GM12878 (cell line): ENCODE measurements at regions of chr18 and their contacts with region 1.

Region 1: DNA sequence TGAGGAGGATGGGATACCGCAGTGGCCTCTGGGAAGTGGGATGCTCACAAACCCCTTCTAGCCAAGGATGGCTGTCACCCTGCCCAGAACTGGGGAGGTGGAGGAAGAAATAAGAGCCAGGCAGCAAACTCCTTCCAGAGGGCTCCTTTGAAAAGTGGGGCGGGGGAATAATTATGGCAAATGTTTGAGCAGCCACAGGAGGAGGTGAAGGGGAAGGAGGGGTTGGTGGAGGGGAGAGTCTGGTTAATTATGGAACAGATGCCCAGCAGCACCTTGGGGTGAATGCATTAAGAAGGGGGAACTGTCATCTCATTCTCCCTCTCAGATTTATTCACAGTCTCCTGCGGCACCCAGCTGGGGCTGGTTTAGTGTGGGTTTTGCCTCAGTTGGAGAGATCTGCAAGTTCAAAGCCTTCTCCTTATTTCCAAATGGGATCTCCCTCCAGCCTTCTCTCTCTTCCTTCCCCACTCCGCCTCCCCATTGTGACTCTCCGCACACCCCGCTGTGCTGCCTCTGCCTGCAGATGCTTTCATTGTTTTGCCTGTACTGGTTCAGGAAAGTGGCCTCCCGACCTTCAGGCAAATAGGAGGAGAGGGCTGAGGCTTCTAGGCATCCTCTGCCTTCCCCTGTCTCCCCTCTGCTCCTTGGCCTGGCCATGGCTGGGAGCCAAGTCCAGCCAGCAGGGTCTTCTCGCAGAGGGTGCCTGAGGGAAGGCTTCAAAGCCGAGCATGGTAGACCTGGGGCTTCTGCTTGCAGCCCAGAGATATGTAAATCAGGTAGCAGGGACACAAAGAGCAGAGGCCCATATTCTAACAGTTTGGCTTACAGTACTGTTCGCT is 457.2 kb upstream of the MEX3C start:
- DNase-seq: no peak
- ATAC-seq: peak; percentile 90
- H3K4me3 ChIP-seq: no peak overlapping the region
- H3K27ac ChIP-seq: peak overlapping the region; percentile 5
- H3K4me1 ChIP-seq: peaks cover 14% of the 10 kb centered on the region
- H3K27me3 ChIP-seq: no peaks in the 10 kb centered on the region
- CTCF ChIP-seq: no peak
- EP300 ChIP-seq: no peak
- POLR2A ChIP-seq: peak; percentile 44
- RAD21 ChIP-seq: no peak

Region 2: GRCh38 chr18:51630706-51631105 is 24.0 kb before region 1 on chr18:
- CTCF ChIA-PET with region 1: interaction called, 4 read pairs
- POLR2A ChIA-PET with region 1: interaction called, 5 read pairs
- RAD21 ChIA-PET with region 1: interaction called, 6 read pairs
- SMC1A ChIA-PET with region 1: interaction called, 19 read pairs
- in situ Hi-C with region 1: no loop called
- intact Hi-C with region 1: no loop called
- DNase-seq: peak; percentile 9
- ATAC-seq: peak; percentile 57
- H3K4me3 ChIP-seq: no peak overlapping the region
- H3K27ac ChIP-seq: no peak overlapping the region
- H3K4me1 ChIP-seq: no peaks in the 10 kb centered on the region
- H3K27me3 ChIP-seq: no peaks in the 10 kb centered on the region
- CTCF ChIP-seq: no peak
- EP300 ChIP-seq: no peak
- POLR2A ChIP-seq: no peak
- RAD21 ChIP-seq: no peak

Region 3: DNA sequence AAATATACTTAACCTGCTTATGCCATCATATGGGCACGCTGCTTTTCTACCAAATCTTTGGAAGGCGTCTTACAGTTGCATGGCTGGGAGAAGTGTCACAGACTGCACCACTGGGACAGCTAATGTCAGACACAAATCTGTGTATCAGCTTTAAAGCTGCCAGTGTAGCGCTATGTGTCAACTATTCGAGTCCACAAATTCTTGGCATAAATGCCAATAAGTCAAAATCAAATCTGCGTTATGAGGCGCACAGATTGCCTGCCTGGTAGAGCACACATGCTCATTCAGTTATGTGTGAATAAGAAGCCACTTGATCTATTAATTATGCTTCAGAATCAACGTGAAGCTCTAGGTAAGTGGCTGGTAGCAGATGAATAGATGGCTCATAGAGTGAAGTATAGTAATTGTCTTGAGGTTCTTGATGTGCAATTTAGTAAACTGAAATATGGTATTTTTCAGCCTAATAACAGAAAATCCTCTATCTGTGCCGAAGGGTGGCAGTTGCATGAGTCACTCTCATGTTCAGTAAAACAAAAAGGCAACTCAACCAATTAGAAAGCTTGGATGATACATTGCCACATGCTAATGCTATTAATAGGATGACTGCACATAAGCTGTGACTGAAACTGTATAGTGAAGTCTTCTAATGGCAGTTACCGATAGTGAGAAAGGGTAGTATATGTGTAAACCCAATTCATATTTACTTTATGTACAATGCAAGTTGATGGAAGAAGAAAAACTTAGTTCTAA is 737.3 kb after region 1 on chr18:
- CTCF ChIA-PET with region 1: no interaction called
- POLR2A ChIA-PET with region 1: no interaction called
- RAD21 ChIA-PET with region 1: no interaction called
- SMC1A ChIA-PET with region 1: no interaction called
- in situ Hi-C with region 1: no loop called
- intact Hi-C with region 1: loop called (anchors 10 kb)
- DNase-seq: peak; percentile 52
- ATAC-seq: peak; percentile 71
- H3K4me3 ChIP-seq: no peak overlapping the region
- H3K27ac ChIP-seq: no peak overlapping the region
- H3K4me1 ChIP-seq: peaks cover 2% of the 10 kb centered on the region; the same call in 1 of the 2 replicates
- H3K27me3 ChIP-seq: no peaks in the 10 kb centered on the region
- CTCF ChIP-seq: no peak
- EP300 ChIP-seq: no peak
- POLR2A ChIP-seq: no peak
- RAD21 ChIP-seq: no peak